WTC11 (cell line): ENCODE measurements at regions of chr5 and their contacts with region 1.

Region 1: DNA sequence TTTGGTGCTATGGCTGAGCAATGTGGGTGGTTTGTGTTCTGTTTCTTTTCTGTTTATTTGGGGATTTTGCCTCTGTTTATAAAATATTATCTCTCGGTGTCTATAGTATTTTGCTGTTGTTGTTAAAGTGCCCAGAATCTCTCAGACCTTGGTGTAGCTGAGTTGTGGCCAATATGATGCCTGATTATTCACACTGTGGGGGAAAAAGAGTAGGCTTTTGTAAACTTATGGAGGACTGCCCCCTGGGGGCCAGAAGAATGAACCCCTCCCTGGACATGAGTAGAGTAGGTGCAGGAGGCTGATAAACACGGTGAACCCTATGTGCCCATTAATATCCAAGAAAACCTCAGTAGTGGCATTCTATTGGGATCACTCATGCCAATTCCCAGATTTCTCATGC is 49.0 kb upstream of the DPYSL3 start:
- DNase-seq: peak; percentile 61
- ATAC-seq: peak; percentile 57
- H3K4me3 Mint-ChIP-seq: no peak overlapping the region
- H3K27ac Mint-ChIP-seq: 0 out of 2 replicates have a peak overlapping the region, but pooled peaks have one; percentile 30
- H3K4me1 Mint-ChIP-seq: peaks cover 68% of the 10 kb centered on the region
- H3K27me3 Mint-ChIP-seq: no peaks in the 10 kb centered on the region
- CTCF ChIP-seq: peak; percentile 63

Region 2: DNA sequence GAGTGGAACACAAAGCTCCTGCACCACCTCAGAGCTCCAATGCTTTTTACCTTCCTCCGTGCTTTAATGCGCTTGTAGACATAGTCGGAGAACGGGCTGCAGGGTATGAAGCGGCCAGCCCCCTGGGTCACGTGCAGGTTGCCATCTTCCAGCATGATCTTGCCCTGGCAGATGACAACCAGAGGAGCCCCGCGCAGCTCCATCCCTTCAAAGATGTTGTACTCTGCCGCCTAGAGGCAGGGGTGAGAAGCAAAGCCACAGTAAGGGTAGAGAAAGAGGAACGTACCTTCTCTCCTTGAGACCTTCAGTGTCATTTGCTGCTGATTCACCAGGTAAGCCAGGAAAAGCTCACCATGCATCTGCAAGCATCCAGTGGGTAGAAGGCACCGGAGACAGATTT is 161.2 kb before region 1 on chr5:
- CTCF ChIA-PET with region 1: interaction called, 13 read pairs
- POLR2A ChIA-PET with region 1: no interaction called
- DNase-seq: peak; percentile 45
- ATAC-seq: peak; percentile 81
- H3K4me3 Mint-ChIP-seq: no peak overlapping the region
- H3K27ac Mint-ChIP-seq: peak overlapping the region; percentile 44; the same call in 1 of the 2 replicates
- H3K4me1 Mint-ChIP-seq: peaks cover 10% of the 10 kb centered on the region
- H3K27me3 Mint-ChIP-seq: no peaks in the 10 kb centered on the region
- CTCF ChIP-seq: no peak

Region 3: GRCh38 chr5:147432323-147432722 is 126.5 kb before region 1 on chr5:
- CTCF ChIA-PET with region 1: interaction called, 11 read pairs
- POLR2A ChIA-PET with region 1: no interaction called
- DNase-seq: no peak
- ATAC-seq: no peak
- H3K4me3 Mint-ChIP-seq: no peak overlapping the region
- H3K27ac Mint-ChIP-seq: peak overlapping the region; percentile 57
- H3K4me1 Mint-ChIP-seq: peaks cover 71% of the 10 kb centered on the region
- H3K27me3 Mint-ChIP-seq: no peaks in the 10 kb centered on the region
- CTCF ChIP-seq: no peak

Region 4: DNA sequence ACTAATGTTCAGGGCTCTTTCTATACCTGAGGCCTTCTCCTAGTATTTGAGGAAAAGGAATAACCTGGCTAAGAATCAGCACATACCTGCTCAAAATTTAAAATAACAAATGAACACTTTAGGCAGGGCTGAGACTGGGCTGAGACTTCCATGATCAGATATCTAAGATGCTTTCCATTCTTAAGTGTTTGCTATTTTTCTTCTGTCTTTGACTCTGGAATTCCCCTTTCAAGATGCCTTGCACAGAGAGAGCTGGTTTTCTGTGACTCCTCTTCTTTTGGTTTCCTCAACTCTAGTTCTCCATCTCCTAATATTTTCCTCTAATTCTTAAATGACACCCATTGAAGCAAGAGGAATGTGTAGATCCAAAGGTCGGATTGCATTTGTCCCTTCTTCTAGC is 110.1 kb before region 1 on chr5:
- CTCF ChIA-PET with region 1: interaction called, 84 read pairs
- POLR2A ChIA-PET with region 1: interaction called, 6 read pairs
- DNase-seq: no peak
- ATAC-seq: no peak
- H3K4me3 Mint-ChIP-seq: peak overlapping the region; percentile 96
- H3K27ac Mint-ChIP-seq: peak overlapping the region; percentile 76
- H3K4me1 Mint-ChIP-seq: peaks cover 76% of the 10 kb centered on the region
- H3K27me3 Mint-ChIP-seq: no peaks in the 10 kb centered on the region; the same call in 1 of the 2 replicates
- CTCF ChIP-seq: no peak

Region 5: GRCh38 chr5:147453875-147454814 is 104.7 kb before region 1 on chr5:
- CTCF ChIA-PET with region 1: interaction called, 84 read pairs
- POLR2A ChIA-PET with region 1: interaction called, 6 read pairs
- DNase-seq: peak; percentile 94
- ATAC-seq: peak; percentile 62
- H3K4me3 Mint-ChIP-seq: peak overlapping the region; percentile 96
- H3K27ac Mint-ChIP-seq: peak overlapping the region; percentile 95
- H3K4me1 Mint-ChIP-seq: peaks cover 72% of the 10 kb centered on the region
- H3K27me3 Mint-ChIP-seq: no peaks in the 10 kb centered on the region; the same call in 1 of the 2 replicates
- CTCF ChIP-seq: peak; percentile 92

Region 6: DNA sequence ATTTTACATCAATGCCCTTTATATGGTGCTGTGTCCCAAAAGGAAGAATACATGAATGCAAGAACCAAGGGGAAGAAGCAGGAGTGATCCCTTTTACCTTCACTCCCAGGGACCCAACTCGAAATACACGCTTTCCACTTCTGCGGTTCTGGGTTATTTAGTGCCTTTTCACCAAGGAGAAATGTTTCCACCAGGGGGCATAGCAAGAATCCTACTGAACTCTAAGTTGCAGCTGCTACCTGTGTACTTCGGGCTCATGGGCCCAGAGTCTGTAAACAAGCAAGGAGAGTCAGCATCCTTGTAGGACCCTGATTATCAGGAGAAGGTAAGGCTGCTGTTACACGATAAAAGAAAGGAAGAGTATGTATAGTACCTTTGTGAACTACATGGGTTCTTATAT is 94.6 kb before region 1 on chr5:
- CTCF ChIA-PET with region 1: interaction called, 40 read pairs
- POLR2A ChIA-PET with region 1: no interaction called
- DNase-seq: peak; percentile 46
- ATAC-seq: peak; percentile 83
- H3K4me3 Mint-ChIP-seq: no peak overlapping the region
- H3K27ac Mint-ChIP-seq: peak overlapping the region; percentile 73
- H3K4me1 Mint-ChIP-seq: peaks cover 57% of the 10 kb centered on the region
- H3K27me3 Mint-ChIP-seq: no peaks in the 10 kb centered on the region
- CTCF ChIP-seq: 0 out of 2 replicates have a peak, but pooled peaks have one; percentile 41

Region 7: DNA sequence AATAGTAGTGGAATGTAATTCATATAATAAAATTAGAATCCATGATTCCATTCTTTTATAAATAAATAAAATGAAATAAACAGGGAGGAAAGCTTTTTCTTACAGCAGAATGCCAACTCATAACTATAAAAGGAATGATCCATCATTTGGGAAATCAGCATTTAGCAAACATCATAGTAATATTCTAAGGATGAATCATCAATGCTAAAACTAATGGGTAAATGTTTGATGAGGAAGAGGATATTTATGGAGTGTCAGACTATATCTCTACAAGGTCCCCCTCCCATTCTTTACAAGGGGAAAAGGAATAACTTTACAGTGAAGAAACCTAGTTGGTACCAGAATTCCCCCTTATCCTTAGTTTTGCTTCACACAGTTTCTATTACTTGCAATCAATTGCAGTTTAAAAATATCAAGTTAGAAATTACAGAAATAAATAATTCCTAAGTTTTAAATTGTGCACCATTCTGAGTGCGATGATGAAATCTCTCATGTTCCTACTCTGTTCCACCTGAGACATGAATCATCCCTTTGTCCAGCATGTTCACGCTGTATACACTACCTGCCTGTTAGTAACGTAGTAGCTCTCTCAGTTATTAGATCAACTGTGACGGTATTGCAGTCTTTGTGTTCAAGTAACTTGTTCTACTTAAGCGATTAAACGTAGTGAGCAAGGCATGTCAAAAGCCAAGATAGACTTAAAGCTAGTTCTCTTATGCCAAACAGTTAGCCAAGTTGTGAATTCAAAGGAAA is 237.9 kb after region 1 on chr5:
- CTCF ChIA-PET with region 1: no interaction called
- POLR2A ChIA-PET with region 1: no interaction called
- DNase-seq: no peak
- ATAC-seq: no peak
- H3K4me3 Mint-ChIP-seq: no peak overlapping the region
- H3K27ac Mint-ChIP-seq: no peak overlapping the region
- H3K4me1 Mint-ChIP-seq: no peaks in the 10 kb centered on the region; the same call in 1 of the 2 replicates
- H3K27me3 Mint-ChIP-seq: no peaks in the 10 kb centered on the region; the same call in 1 of the 2 replicates
- CTCF ChIP-seq: no peak